ENCODE measurements at regions of chr2 and their contacts with region 1.

Region 1: GRCh38 chr2:27233341-27233740 is 16.2 kb downstream of the CAD start:
- DNase-seq: no peak
- H3K4me3 ChIP-seq: no peak overlapping the region
- H3K27ac ChIP-seq: no peak overlapping the region
- H3K4me1 ChIP-seq: no peaks in the 10 kb centered on the region
- H3K27me3 ChIP-seq: no peaks in the 10 kb centered on the region
- CTCF ChIP-seq: no peak
- EP300 ChIP-seq: no peak
- RAD21 ChIP-seq: no peak

Region 2: GRCh38 chr2:27177441-27178351 is 55.6 kb before region 1 on chr2:
- CTCF ChIA-PET with region 1: no interaction called
- POLR2A ChIA-PET with region 1: no interaction called
- DNase-seq: no peak
- H3K4me3 ChIP-seq: no peak overlapping the region
- H3K27ac ChIP-seq: no peak overlapping the region
- H3K4me1 ChIP-seq: peaks cover 3 to 28% of the 10 kb centered on the region in 2 experiments; a peak in 3 of 4 replicates
- H3K27me3 ChIP-seq: no peaks in the 10 kb centered on the region
- CTCF ChIP-seq: no peak
- EP300 ChIP-seq: no peak
- RAD21 ChIP-seq: no peak

Region 3: DNA sequence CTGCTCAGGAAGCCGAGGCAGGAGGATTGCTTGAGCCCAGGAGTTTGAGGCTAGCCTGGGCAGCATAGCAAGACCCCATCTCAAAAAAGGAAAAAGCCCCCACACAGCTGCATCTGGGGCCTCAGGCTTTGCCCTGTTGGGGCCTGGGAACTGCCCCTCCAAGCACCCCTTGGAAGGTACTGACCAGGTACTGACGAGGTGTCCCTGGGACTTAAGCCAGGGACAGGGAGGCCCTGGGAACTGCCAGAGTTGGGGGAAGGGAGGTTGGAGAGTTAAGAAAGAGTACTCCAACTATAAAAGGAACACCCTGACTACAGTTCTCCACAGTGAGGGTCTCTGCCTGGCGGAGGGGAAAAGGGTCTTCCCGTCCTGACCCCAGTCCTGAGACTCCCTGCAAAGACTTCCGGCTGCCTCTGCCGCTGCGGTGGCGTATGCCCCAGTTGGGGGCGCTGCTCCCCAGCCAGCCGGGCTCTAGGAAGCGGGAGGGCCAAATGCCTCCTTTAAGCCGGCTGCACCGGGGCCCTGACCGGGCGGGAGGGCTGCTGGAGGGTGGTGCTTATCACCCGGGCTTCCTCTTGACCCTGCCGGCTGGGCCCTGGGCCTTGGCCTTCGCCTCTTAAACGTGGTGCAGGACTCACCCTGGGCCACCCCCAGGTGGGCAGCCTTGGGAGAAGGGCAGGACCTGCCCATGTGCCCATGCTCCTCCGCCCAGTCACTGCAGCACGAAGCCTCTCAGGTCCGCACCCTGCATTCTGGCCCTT is 16.7 kb after region 1 on chr2:
- CTCF ChIA-PET with region 1: interaction called, 24 read pairs
- POLR2A ChIA-PET with region 1: interaction called, 4 read pairs
- DNase-seq: peak; percentile 87
- H3K4me3 ChIP-seq: no peak overlapping the region; a peak in 1 of 4 replicates
- H3K27ac ChIP-seq: no peak overlapping the region
- H3K4me1 ChIP-seq: peaks cover 5 to 12% of the 10 kb centered on the region in 2 experiments; a peak in 3 of 4 replicates
- H3K27me3 ChIP-seq: no peaks in the 10 kb centered on the region
- CTCF ChIP-seq: peak; percentile 66
- EP300 ChIP-seq: no peak
- RAD21 ChIP-seq: peak; percentile 74

Region 4: DNA sequence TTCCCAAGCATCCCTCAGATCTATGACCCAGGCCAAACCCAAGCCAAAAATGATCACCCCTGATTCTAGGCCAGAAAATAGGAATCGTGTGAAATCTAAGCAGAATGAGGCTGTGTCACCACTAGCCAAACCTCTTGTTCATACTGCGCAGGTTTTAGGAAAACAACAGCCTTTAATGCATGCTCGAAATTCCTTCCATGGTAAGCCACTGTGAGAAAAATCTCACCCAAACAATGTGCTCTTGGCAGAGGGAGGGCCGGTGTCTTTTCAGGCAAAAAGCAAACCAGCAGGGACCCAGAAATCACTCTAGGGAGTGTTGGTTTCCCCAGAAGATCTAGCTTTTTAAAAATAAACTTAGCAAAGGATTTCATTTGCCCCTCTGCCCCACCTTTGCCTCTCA is 1088.1 kb after region 1 on chr2:
- CTCF ChIA-PET with region 1: no interaction called
- POLR2A ChIA-PET with region 1: no interaction called
- DNase-seq: no peak
- H3K4me3 ChIP-seq: no peak overlapping the region
- H3K27ac ChIP-seq: no peak overlapping the region
- H3K4me1 ChIP-seq: peaks cover 0 to 18% of the 10 kb centered on the region in 2 experiments; a peak in 1 of 4 replicates
- H3K27me3 ChIP-seq: no peaks in the 10 kb centered on the region
- CTCF ChIP-seq: no peak
- EP300 ChIP-seq: no peak
- RAD21 ChIP-seq: no peak

Region 5: DNA sequence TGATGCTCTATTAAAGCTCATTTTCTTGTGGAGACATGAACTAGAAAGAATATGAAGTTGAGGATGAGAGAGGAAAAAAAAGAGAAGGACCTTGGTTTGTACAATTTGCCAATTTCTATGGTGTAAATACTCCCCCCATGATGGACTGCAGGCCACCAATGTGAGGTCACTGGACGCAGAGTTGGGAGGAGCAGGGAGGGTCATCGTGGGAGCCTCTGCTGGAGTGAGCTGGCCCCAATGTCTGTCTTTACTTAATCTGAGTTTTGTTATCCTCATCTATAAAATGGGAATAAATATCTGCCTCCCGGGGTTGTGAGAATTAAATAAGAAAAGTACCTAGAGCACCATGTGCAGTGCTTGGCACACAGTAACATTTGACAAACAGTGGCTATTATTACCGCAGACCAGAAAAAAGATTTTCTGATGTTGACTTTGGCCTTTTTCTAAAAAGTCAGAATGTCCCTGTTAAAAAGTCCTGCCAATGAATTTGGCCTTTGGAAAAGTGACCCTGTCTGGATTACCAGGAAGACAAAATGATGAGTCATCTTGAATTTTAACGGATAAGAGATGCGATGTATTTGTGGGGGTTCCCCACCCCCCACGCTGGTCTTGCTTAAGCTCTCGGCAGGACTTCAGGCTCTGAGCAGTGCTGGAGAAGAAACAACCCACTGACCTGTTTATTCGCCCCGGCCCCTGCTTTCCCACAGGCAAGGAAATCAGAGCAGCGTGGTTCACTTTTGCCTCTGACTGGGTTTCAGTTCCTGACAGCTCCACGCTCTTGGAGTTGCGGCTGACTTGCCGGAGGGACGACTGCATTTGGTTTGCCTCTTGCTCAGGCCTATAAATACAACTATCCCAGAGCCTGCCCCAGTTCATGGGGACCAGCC is 1109.0 kb after region 1 on chr2:
- CTCF ChIA-PET with region 1: no interaction called
- POLR2A ChIA-PET with region 1: no interaction called
- DNase-seq: no peak
- H3K4me3 ChIP-seq: no peak overlapping the region
- H3K27ac ChIP-seq: peak overlapping the region in 1 of 2 experiments; percentile 26; a peak in 1 of 4 replicates
- H3K4me1 ChIP-seq: peaks cover 13 to 47% of the 10 kb centered on the region in 2 experiments; a peak in 2 of 4 replicates
- H3K27me3 ChIP-seq: no peaks in the 10 kb centered on the region
- CTCF ChIP-seq: no peak
- EP300 ChIP-seq: peak in 1 of 2 experiments; percentile 20; a peak in 1 of 4 replicates
- RAD21 ChIP-seq: no peak

Measured in SK-N-SH (cell line).